ENCODE measurements at regions of chr3 and their contacts with region 1.

Region 1: DNA sequence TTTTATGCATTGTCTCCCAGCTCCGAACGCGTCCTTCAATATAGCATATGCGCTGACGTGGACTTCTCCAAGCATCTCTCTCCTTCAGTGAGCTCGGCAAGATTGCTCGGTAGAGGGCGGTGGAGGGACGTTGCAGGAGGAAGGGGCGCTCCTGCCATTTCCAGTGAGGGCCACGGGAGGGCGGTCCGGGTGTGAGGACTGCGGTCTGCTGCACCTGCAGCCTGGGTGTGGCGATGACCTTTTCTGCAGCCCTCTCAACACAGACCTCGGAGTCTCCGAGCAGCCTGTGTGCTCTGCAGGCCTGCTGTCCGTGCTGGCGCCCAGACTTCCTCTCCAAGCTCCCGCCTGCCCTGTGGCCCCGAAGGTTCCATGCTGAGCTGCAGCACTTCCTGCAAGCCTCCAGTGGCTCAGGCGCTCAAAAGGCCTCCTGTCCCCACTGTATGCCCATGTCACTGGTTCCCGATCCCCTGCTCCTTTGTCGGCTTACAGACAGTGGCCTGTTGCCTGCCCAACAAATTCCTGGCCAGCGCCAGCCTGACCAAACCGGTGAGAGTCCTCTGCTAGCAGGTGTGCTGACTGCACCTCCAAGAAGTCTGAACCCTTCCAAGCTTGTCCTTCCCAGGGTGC is 8.9 kb upstream of the RTP3 start:
- DNase-seq: peak; percentile 95 to 96 (median 95)
- ATAC-seq: peak; percentile 90 to 97 (median 94)
- H3K4me3 ChIP-seq: peak overlapping the region in 1 of 3 donors; percentile 10
- H3K27ac ChIP-seq: no peak overlapping the region
- H3K4me1 ChIP-seq: peaks cover 0 to 38% (median 17%) of the 10 kb centered on the region in 4 donors
- H3K27me3 ChIP-seq: no peaks in the 10 kb centered on the region
- CTCF ChIP-seq: peak; percentile 100
- POLR2A ChIP-seq: no peak

Region 2: GRCh38 chr3:46553154-46553553 is 64.3 kb after region 1 on chr3:
- intact Hi-C with region 1: loop called in 1 of 2 experiments (anchors 5 kb)
- DNase-seq: no peak
- ATAC-seq: peak in 1 of 4 donors; percentile 52
- H3K4me3 ChIP-seq: no peak overlapping the region
- H3K27ac ChIP-seq: no peak overlapping the region
- H3K4me1 ChIP-seq: peaks cover 0 to 15% (median 2%) of the 10 kb centered on the region in 4 donors
- H3K27me3 ChIP-seq: no peaks in the 10 kb centered on the region
- CTCF ChIP-seq: no peak
- POLR2A ChIP-seq: no peak

Measured in right lobe of liver (tissue), 6 donors.